Posterior vena cava (tissue), 2 donors: ENCODE measurements at regions of chr3 and their contacts with region 1.

Region 1: DNA sequence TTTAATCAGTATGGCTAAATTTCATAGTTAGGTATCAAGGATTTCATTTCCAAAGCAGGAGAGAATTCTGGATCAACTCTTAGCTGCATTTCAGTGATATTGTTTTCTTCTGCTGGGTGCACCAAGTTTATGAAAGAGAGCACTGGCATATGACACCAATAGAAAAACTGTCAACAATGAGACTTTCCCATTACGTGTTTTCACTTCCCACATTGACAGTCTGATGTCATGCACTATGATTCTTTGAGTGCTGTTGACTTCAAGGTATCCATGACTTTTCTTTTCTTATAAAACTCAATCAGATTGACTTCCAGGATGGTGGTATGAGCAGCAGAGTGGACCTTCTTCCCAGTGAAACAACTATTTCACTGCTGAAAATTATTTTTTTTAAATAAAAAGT is 476.1 kb downstream of the EDEM1 start:
- DNase-seq: no peak

Region 2: GRCh38 chr3:4994823-4995499 is 668.6 kb before region 1 on chr3:
- intact Hi-C with region 1: loop called in 1 of 2 experiments (anchors 5 kb)
- DNase-seq: peak; percentile 95

Region 3: DNA sequence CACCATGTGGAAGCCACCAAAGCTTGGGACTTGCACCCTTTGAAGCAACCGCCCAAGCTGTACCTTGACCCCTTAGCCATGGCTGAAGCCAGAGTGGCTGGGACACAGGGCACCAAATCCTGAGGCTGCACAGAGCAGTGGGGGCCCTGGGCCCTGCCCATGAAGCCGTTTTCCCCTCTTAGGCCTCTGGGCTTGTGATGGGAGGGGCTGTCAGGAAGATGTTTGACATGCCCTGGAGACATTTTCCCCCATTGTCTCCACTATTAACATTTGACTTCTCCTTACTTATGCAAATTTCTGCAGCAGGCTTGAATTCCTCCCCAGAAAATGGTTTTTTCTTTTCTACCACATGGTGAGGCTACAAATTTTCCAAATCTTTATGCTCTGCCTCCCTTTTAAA is 46.1 kb after region 1 on chr3:
- intact Hi-C with region 1: no loop called
- DNase-seq: no peak

Region 4: GRCh38 chr3:5767304-5767703 is 103.7 kb after region 1 on chr3:
- intact Hi-C with region 1: no loop called
- DNase-seq: no peak